H1 (cell line): ENCODE measurements at regions of chr5 and their contacts with region 1.

Region 1: GRCh38 chr5:96868603-96869371 is 7.5 kb upstream of the ERAP2 start:
- DNase-seq: no peak
- H3K4me3 ChIP-seq: no peak overlapping the region
- H3K27ac ChIP-seq: no peak overlapping the region
- H3K4me1 ChIP-seq: peaks cover 0 to 8% (median 5%) of the 10 kb centered on the region in 4 experiments; a peak in 4 of 7 replicates
- H3K27me3 ChIP-seq: no peaks in the 10 kb centered on the region
- CTCF ChIP-seq: peak in 2 of 3 experiments; percentile 81 to 92; a peak in 3 of 4 replicates
- EP300 ChIP-seq: no peak
- POLR2A ChIP-seq: no peak
- RAD21 ChIP-seq: peak; percentile 94 to 95

Region 2: DNA sequence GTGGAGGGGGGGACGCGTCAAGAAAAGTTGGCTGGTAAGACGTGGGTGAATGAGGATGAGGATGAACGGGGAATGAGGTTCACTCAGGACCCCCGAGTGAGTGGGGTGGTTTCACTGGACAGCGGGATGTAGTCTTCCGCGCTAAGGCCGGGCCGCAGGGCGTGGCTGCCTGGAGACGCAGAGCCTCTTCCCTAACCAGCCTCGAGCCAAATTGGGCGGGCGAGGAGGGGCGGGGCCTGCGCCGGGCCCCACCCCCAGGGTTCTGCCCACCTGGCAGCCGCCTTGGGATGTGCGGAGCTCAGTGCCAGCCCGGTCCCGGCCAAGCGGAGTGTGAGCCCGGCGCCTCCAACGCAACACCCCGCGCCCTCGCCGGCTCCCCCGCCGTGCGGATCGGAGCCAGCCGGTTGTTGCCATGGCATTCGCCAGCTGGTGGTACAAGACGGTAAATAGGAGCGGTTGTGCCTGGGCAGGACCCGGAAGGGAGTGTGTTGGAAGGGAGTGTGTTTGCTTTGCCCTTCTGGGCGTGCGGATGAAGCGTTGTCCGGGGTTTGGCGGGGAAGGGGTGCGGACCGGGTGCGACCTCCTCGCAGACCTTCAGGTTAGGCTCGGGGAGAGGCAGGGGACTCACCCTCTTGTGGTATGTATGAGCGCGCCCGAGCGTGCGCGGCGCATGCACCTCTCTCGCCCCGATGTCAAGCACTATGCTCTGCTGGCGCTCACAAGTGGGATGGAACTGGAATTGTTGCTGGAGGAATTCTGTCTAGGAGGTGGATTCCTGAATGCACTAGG is 205.9 kb before region 1 on chr5:
- CTCF ChIA-PET with region 1: no interaction called
- POLR2A ChIA-PET with region 1: no interaction called
- DNase-seq: peak in 1 of 2 experiments; percentile 95
- H3K4me3 ChIP-seq: peak overlapping the region; percentile 79 to 92 (median 86)
- H3K27ac ChIP-seq: no peak overlapping the region
- H3K4me1 ChIP-seq: peaks cover 0 to 2% (median under 1%) of the 10 kb centered on the region in 4 experiments; a peak in 2 of 7 replicates
- H3K27me3 ChIP-seq: peaks cover 2 to 8% (median 6%) of the 10 kb centered on the region in 4 experiments; a peak in 4 of 7 replicates
- CTCF ChIP-seq: no peak
- EP300 ChIP-seq: no peak
- POLR2A ChIP-seq: peak in 1 of 2 experiments; percentile 56; a peak in 1 of 3 replicates
- RAD21 ChIP-seq: no peak

Region 3: GRCh38 chr5:96885518-96886338 is 16.9 kb after region 1 on chr5:
- CTCF ChIA-PET with region 1: interaction called, 12 read pairs
- POLR2A ChIA-PET with region 1: no interaction called
- DNase-seq: no peak
- H3K4me3 ChIP-seq: no peak overlapping the region
- H3K27ac ChIP-seq: no peak overlapping the region
- H3K4me1 ChIP-seq: no peaks in the 10 kb centered on the region
- H3K27me3 ChIP-seq: no peaks in the 10 kb centered on the region
- CTCF ChIP-seq: no peak
- EP300 ChIP-seq: no peak
- POLR2A ChIP-seq: no peak
- RAD21 ChIP-seq: no peak

Region 4: DNA sequence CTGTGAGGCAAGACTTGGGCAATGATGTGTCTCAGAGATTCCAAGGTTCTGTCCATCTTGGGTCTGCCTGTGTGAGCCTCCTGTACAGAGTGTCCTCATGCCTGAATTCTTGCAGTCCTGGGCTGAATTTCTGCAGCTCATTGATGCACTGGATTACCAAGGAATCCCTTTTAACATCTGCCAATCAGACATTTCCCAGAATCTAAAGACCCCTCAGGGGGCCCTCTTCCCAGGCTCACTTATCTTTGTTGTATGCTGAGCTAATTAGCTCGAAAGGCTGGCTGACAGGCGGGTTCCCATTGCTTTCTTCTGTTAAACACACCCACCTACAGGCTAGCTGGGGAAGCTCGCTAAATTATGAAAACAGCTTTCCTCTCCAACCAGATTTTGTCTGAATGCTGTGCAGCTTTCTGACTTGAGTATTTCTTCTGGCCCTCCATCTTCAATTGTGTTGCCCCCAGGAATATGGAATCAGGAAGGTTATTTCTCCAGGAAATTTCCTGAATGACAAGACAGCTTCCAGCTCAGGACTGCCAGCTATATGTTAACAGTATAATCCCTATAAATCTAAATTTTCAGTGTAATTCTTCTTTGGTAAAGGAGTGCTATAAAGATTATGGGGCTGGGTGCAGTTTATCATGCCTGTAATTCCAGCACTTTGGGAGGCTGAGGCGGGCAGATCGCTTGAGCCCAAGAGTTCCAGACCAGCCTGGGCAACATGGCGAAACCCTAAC is 273.9 kb after region 1 on chr5 and contains the start of gene LIX1:
- CTCF ChIA-PET with region 1: interaction called, 38 read pairs
- POLR2A ChIA-PET with region 1: no interaction called
- DNase-seq: peak in 1 of 2 experiments; percentile 62
- H3K4me3 ChIP-seq: peak within 1 kb of the TSS in 1 of 4 experiments; percentile 12; a peak in 3 of 8 replicates
- H3K27ac ChIP-seq: no peak within 1 kb of the TSS
- H3K4me1 ChIP-seq: peaks cover 0 to 6% (median 2%) of the 10 kb centered on the region in 4 experiments; a peak in 4 of 7 replicates
- H3K27me3 ChIP-seq: no peaks in the 10 kb centered on the region
- CTCF ChIP-seq: peak; percentile 23 to 76 (median 70)
- EP300 ChIP-seq: no peak
- POLR2A ChIP-seq: no peak
- RAD21 ChIP-seq: peak; percentile 91 to 93
- total RNA-seq, gene LIX1: 0.26 and 0.33 TPM in 2 replicates

Region 5: GRCh38 chr5:97149709-97150108 is 280.9 kb after region 1 on chr5:
- CTCF ChIA-PET with region 1: interaction called, 11 read pairs
- POLR2A ChIA-PET with region 1: no interaction called
- DNase-seq: no peak
- H3K4me3 ChIP-seq: no peak overlapping the region
- H3K27ac ChIP-seq: no peak overlapping the region
- H3K4me1 ChIP-seq: no peaks in the 10 kb centered on the region
- H3K27me3 ChIP-seq: no peaks in the 10 kb centered on the region
- CTCF ChIP-seq: no peak
- EP300 ChIP-seq: no peak
- POLR2A ChIP-seq: no peak
- RAD21 ChIP-seq: no peak